Cardiac septum (tissue), 1 donor: ENCODE measurements at regions of chr22 and their contacts with region 1.

Region 1: GRCh38 chr22:27799334-27800249 is 2.0 kb downstream of the MN1 start:
- DNase-seq: no peak

Region 2: GRCh38 chr22:27170491-27170890 is 629.1 kb before region 1 on chr22:
- intact Hi-C with region 1: no loop called
- DNase-seq: no peak

Region 3: DNA sequence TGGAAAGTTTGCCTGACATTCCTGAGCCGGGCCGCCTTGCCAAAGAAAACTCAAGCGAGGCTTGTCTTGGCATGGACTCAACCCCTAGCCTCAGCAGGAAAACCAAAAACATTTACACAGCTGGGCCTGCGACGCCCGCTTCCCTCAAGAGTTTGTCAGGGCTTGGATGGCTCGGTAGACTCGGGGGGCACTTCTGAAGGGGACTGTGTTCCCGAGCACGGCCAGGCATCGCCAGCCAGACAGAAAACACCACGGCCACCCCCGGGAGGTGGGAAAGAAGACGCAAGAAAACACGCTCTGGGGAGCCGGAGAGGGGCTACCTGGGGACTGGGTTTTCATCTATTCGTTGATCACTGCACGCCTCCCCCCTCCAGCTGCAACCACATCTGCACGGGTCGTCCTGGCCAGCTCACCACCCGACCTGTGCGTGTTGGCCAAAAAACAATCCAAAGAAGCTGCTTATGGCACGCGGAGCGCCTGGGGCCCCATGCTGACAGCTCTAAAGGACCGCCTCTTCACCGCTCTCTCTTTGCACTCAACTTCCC is 378.7 kb before region 1 on chr22:
- intact Hi-C with region 1: loop called (anchors 5 kb)
- DNase-seq: peak; percentile 84

Region 4: GRCh38 chr22:27642104-27642800 is 157.3 kb before region 1 on chr22:
- intact Hi-C with region 1: no loop called
- DNase-seq: no peak

Region 5: GRCh38 chr22:27836196-27836595 is 36.6 kb after region 1 on chr22:
- intact Hi-C with region 1: no loop called
- DNase-seq: no peak